ENCODE measurements at regions of chr5 and their contacts with region 1.

Region 1: GRCh38 chr5:68252673-68253623 is 37.4 kb downstream of the PIK3R1 start:
- DNase-seq: peak; percentile 59
- H3K4me3 Mint-ChIP-seq: no peak overlapping the region
- H3K27ac Mint-ChIP-seq: no peak overlapping the region
- H3K4me1 Mint-ChIP-seq: peaks cover 90% of the 10 kb centered on the region
- H3K27me3 Mint-ChIP-seq: no peaks in the 10 kb centered on the region

Region 2: GRCh38 chr5:67165526-67166459 is 1087.2 kb before region 1 on chr5:
- CTCF ChIA-PET with region 1: no interaction called
- POLR2A ChIA-PET with region 1: no interaction called
- intact Hi-C with region 1: loop called (anchors 10 kb)
- DNase-seq: peak; percentile 89
- H3K4me3 Mint-ChIP-seq: peak overlapping the region; percentile 91
- H3K27ac Mint-ChIP-seq: peak overlapping the region; percentile 98
- H3K4me1 Mint-ChIP-seq: peaks cover 70% of the 10 kb centered on the region
- H3K27me3 Mint-ChIP-seq: no peaks in the 10 kb centered on the region

Region 3: DNA sequence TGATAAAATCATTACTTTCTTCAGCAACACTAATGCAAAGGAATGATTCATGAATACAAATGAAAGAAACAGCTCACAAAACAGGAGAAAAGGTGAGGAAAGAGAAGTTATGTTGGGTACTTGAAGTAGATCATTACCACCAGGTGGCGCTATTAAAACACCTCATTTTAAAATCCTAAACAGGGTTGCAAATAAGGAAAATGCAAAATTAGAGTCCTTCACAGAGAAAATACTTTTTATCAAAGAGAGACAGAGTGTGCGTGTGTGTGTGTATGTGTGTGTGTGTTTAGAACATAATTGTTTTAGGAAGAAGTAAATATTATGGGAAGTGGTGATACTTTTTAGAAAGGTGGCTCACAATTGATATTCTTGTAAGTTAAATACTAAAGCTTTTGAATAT is 1006.8 kb before region 1 on chr5:
- CTCF ChIA-PET with region 1: interaction called, 52 read pairs
- POLR2A ChIA-PET with region 1: no interaction called
- intact Hi-C with region 1: loop called (anchors 2 kb)
- DNase-seq: no peak
- H3K4me3 Mint-ChIP-seq: no peak overlapping the region
- H3K27ac Mint-ChIP-seq: no peak overlapping the region
- H3K4me1 Mint-ChIP-seq: peaks cover 8% of the 10 kb centered on the region
- H3K27me3 Mint-ChIP-seq: no peaks in the 10 kb centered on the region

Region 4: GRCh38 chr5:67516948-67517565 is 735.9 kb before region 1 on chr5:
- CTCF ChIA-PET with region 1: no interaction called
- POLR2A ChIA-PET with region 1: no interaction called
- intact Hi-C with region 1: loop called (anchors 10 kb)
- DNase-seq: no peak
- H3K4me3 Mint-ChIP-seq: no peak overlapping the region
- H3K27ac Mint-ChIP-seq: no peak overlapping the region
- H3K4me1 Mint-ChIP-seq: peaks cover 41% of the 10 kb centered on the region
- H3K27me3 Mint-ChIP-seq: no peaks in the 10 kb centered on the region

Region 5: GRCh38 chr5:68070591-68071281 is 182.2 kb before region 1 on chr5:
- CTCF ChIA-PET with region 1: interaction called, 3 read pairs
- POLR2A ChIA-PET with region 1: no interaction called
- intact Hi-C with region 1: loop called (anchors 10 kb)
- DNase-seq: peak; percentile 11
- H3K4me3 Mint-ChIP-seq: no peak overlapping the region
- H3K27ac Mint-ChIP-seq: no peak overlapping the region
- H3K4me1 Mint-ChIP-seq: peaks cover 11% of the 10 kb centered on the region
- H3K27me3 Mint-ChIP-seq: no peaks in the 10 kb centered on the region

Region 6: DNA sequence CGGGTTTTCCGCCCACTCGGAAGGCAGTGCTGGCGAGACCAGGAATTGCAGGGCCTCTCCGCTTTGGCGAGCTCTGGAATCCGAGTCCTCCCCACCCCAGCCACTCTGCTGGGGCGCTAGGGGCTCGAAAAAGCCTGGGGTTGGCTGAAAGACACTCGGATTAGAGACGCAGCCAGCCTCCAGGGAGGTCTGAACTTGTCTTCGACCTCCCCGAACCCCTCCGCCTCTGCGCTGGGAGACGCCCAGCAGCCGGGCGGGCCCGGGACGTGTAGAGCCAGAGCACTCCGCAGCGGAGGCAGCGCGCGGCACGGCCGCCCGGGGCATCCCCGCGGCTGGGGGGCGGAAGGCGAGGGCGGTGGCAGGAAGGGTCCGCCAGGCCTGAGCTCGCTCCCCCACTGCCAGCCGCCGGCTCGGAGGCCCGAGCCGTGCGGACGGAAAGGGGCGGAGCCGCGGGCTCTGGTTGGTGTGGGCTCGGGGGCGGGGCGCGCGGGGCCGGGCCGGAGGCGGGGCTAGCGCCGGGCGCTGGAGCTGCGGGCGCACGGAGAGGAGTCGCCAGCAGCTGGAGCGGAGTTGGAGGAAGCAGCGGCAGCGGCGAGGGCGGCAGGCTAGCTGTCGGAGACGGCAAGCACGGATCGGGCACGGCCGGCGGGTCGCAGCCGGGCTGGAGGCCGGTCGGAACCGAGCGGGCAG is 37.6 kb before region 1 on chr5 and contains the start of gene PIK3R1:
- CTCF ChIA-PET with region 1: interaction called, 22 read pairs
- POLR2A ChIA-PET with region 1: interaction called, 35 read pairs
- intact Hi-C with region 1: loop called (anchors 1 kb)
- DNase-seq: peak; percentile 95
- H3K4me3 Mint-ChIP-seq: peak within 1 kb of the TSS; percentile 91
- H3K27ac Mint-ChIP-seq: peak within 1 kb of the TSS; percentile 97
- H3K4me1 Mint-ChIP-seq: peaks cover 39% of the 10 kb centered on the region
- H3K27me3 Mint-ChIP-seq: no peaks in the 10 kb centered on the region
- total RNA-seq, gene PIK3R1: 35.3 to 40.9 TPM

Region 7: GRCh38 chr5:68239487-68239886 is 13.5 kb before region 1 on chr5:
- CTCF ChIA-PET with region 1: interaction called, 10 read pairs
- POLR2A ChIA-PET with region 1: interaction called, 3 read pairs
- intact Hi-C with region 1: loop called (anchors 1 kb)
- DNase-seq: peak; percentile 88
- H3K4me3 Mint-ChIP-seq: peak overlapping the region; percentile 52
- H3K27ac Mint-ChIP-seq: peak overlapping the region; percentile 58
- H3K4me1 Mint-ChIP-seq: peaks cover 82% of the 10 kb centered on the region
- H3K27me3 Mint-ChIP-seq: no peaks in the 10 kb centered on the region